ENCODE measurements at regions of chr7 and their contacts with region 1.

Region 1: GRCh38 chr7:131521651-131522163 is 34.7 kb downstream of the PODXL start:
- DNase-seq: no peak
- H3K4me3 ChIP-seq: no peak overlapping the region
- H3K27ac ChIP-seq: no peak overlapping the region
- H3K4me1 ChIP-seq: peaks cover 5 to 31% (median 23%) of the 10 kb centered on the region in 4 experiments
- H3K27me3 ChIP-seq: no peaks in the 10 kb centered on the region
- CTCF ChIP-seq: no peak
- EP300 ChIP-seq: no peak
- POLR2A ChIP-seq: no peak
- RAD21 ChIP-seq: no peak

Region 2: DNA sequence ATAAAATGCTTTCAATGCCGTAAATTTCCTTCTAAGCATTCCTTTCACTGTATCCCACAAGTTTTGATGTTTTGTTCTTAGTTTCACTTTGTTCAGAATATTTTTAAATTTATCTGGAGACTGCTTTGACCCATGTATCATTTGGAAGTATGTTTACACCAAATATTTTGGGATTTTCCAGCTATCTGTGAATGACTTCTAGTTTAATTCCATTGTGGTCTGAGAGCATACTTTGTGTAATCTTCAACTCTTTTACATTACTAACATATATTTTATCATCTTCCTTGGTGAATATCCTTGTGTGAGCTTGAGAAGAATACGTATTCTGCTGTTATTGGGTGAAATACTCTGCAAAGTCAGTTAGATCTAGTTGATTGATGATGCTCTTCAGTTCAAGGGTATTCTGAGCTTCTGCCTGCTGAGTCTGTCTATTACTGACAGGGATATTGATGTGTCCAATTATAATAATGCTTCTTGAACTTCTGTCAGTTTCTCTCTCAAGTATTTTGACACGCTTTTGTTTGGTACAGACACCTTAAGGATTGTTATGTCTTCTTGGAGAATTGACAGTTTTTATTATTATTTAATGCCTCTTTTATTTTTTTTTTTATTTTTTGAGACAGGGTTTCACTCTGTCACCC is 162.5 kb before region 1 on chr7:
- CTCF ChIA-PET with region 1: no interaction called
- POLR2A ChIA-PET with region 1: no interaction called
- DNase-seq: no peak
- H3K4me3 ChIP-seq: no peak overlapping the region
- H3K27ac ChIP-seq: no peak overlapping the region
- H3K4me1 ChIP-seq: peaks cover 0 to 3% (median 0%) of the 10 kb centered on the region in 4 experiments; a peak in 3 of 7 replicates
- H3K27me3 ChIP-seq: no peaks in the 10 kb centered on the region
- CTCF ChIP-seq: no peak
- EP300 ChIP-seq: no peak
- POLR2A ChIP-seq: no peak
- RAD21 ChIP-seq: no peak

Region 3: GRCh38 chr7:131372554-131372953 is 149.2 kb before region 1 on chr7:
- CTCF ChIA-PET with region 1: no interaction called
- POLR2A ChIA-PET with region 1: no interaction called
- DNase-seq: no peak
- H3K4me3 ChIP-seq: peak overlapping the region in 1 of 4 experiments; percentile 7; a peak in 1 of 8 replicates
- H3K27ac ChIP-seq: no peak overlapping the region
- H3K4me1 ChIP-seq: peaks cover 0 to 8% (median 7%) of the 10 kb centered on the region in 4 experiments; a peak in 3 of 7 replicates
- H3K27me3 ChIP-seq: no peaks in the 10 kb centered on the region
- CTCF ChIP-seq: no peak
- EP300 ChIP-seq: no peak
- POLR2A ChIP-seq: no peak
- RAD21 ChIP-seq: no peak

Region 4: DNA sequence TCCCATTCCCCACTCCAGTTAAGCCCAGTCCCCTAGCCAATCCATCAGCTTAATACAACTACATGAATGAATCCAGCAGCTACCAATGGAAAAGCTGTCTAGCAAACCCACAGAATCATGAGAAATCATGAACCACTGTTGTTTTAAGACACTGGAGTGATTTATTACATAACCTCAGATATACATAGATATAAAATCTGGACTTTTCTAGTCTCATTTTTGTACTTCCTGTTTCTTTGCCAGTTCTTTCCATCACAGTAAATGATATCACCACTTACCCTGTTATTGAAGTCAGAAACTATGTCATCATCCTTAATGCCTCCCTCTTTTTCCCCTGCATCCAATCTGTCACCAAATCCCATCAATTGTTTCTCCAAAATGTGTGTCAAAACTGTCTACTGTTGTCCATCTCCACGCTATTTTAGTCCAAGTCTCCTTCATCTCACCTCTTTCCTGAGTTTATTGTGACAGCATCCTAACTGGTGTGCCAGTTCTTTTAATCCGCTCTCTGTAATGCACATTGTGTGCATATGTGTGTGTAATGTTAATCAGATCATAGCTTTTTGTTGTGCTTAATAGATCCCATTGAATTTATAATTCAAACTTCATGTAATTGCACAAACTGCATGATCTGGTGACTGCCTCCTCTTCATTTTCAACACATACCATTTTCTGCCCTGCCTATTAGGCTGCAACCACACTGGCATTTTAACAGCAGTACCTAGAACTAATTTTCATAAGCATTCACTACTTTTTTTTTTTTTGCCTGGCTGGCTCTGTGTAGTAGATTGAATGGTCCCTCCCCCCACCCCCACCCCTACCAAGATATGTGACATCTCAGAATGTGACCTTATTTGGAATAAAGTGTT is 138.1 kb before region 1 on chr7:
- CTCF ChIA-PET with region 1: no interaction called
- POLR2A ChIA-PET with region 1: no interaction called
- DNase-seq: no peak
- H3K4me3 ChIP-seq: no peak overlapping the region
- H3K27ac ChIP-seq: no peak overlapping the region
- H3K4me1 ChIP-seq: peaks cover 0 to 5% (median 2%) of the 10 kb centered on the region in 4 experiments; a peak in 2 of 7 replicates
- H3K27me3 ChIP-seq: no peaks in the 10 kb centered on the region
- CTCF ChIP-seq: no peak
- EP300 ChIP-seq: no peak
- POLR2A ChIP-seq: no peak
- RAD21 ChIP-seq: no peak

Region 5: GRCh38 chr7:131507592-131508331 is 13.9 kb before region 1 on chr7:
- CTCF ChIA-PET with region 1: interaction called, 13 read pairs
- POLR2A ChIA-PET with region 1: interaction called, 5 read pairs
- DNase-seq: peak in 1 of 2 experiments; percentile 76
- H3K4me3 ChIP-seq: no peak overlapping the region
- H3K27ac ChIP-seq: peak overlapping the region; percentile 50; the same call in 1 of the 2 replicates
- H3K4me1 ChIP-seq: peaks cover 0 to 7% (median 3%) of the 10 kb centered on the region in 4 experiments; a peak in 4 of 7 replicates
- H3K27me3 ChIP-seq: no peaks in the 10 kb centered on the region
- CTCF ChIP-seq: peak; percentile 50 to 61 (median 60); a peak in 3 of 4 replicates
- EP300 ChIP-seq: no peak
- POLR2A ChIP-seq: peak; percentile 13 to 38; a peak in 2 of 3 replicates
- RAD21 ChIP-seq: peak; percentile 56 to 59

Region 6: GRCh38 chr7:131533151-131533559 is 11.4 kb after region 1 on chr7:
- CTCF ChIA-PET with region 1: interaction called, 8 read pairs
- POLR2A ChIA-PET with region 1: interaction called, 28 read pairs
- DNase-seq: no peak
- H3K4me3 ChIP-seq: no peak overlapping the region
- H3K27ac ChIP-seq: no peak overlapping the region
- H3K4me1 ChIP-seq: peaks cover 6 to 41% (median 24%) of the 10 kb centered on the region in 4 experiments
- H3K27me3 ChIP-seq: no peaks in the 10 kb centered on the region
- CTCF ChIP-seq: no peak
- EP300 ChIP-seq: no peak
- POLR2A ChIP-seq: peak in 1 of 2 experiments; percentile 14; a peak in 1 of 3 replicates
- RAD21 ChIP-seq: no peak

Region 7: GRCh38 chr7:131836733-131837132 is 315.0 kb after region 1 on chr7:
- CTCF ChIA-PET with region 1: no interaction called
- POLR2A ChIA-PET with region 1: no interaction called
- DNase-seq: peak in 1 of 2 experiments; percentile 29
- H3K4me3 ChIP-seq: no peak overlapping the region
- H3K27ac ChIP-seq: no peak overlapping the region
- H3K4me1 ChIP-seq: no peaks in the 10 kb centered on the region
- H3K27me3 ChIP-seq: no peaks in the 10 kb centered on the region
- CTCF ChIP-seq: peak; percentile 67 to 84 (median 75)
- EP300 ChIP-seq: no peak
- POLR2A ChIP-seq: no peak
- RAD21 ChIP-seq: peak; percentile 49 to 65; a peak in 3 of 4 replicates